ENCODE measurements at regions of chr11 and their contacts with region 1.

Region 1: GRCh38 chr11:108222686-108223448 is at the start of gene ATM:
- DNase-seq: peak; percentile 98
- H3K4me3 Mint-ChIP-seq: no peak within 1 kb of the TSS
- H3K27ac Mint-ChIP-seq: no peak within 1 kb of the TSS
- H3K4me1 Mint-ChIP-seq: peaks cover 35% of the 10 kb centered on the region
- H3K27me3 Mint-ChIP-seq: no peaks in the 10 kb centered on the region
- total RNA-seq, gene ATM: 37.3 and 39.7 TPM in 2 replicates

Region 2: DNA sequence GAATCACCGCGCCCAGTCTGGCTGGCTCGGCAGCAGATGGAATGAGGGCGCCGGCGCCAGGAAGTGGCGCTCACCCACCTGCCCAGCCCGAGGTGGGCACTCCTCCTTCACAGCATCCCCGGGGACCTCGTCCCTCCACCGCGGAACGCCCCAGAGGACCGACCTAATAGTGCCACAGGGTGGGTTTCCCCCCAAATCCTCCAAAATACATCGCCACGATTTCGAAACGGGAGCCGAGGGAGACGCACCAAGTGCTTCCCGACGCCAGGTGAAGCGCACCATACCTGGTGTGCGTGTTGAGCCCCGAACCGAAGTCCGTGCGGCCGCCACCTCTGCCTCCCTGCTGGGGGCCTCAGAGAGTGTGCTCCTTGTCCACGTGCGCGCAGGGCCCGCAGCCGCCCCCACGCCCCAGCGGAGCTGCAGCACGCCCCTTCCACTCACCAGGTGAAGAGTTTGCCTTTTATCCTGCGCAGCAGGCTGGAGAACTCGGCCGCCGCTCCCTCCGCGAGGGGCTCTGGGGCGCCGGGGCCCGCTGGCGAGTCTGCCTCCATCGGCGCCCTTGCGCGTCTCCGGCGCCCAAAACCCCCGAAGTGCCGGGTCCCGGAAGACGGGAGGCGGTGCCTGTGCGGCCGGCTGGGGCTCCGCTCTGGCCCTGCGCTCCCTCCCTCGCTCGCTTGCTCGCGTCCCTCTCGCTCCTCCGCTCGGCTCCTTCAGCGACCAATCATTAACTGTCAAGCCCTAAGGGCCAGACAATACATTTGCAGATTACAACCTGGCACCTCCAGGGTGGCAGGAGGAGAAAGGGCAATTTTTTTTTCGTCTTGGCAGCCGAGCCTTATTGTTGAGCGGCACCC is 364.4 kb before region 1 on chr11 and contains the start of gene SLC35F2:
- intact Hi-C with region 1: loop called (anchors 5 kb)
- DNase-seq: peak; percentile 62
- H3K4me3 Mint-ChIP-seq: peak within 1 kb of the TSS; percentile 95
- H3K27ac Mint-ChIP-seq: peak within 1 kb of the TSS; percentile 83
- H3K4me1 Mint-ChIP-seq: peaks cover 26% of the 10 kb centered on the region
- H3K27me3 Mint-ChIP-seq: peaks cover 8% of the 10 kb centered on the region
- total RNA-seq, gene SLC35F2: 36.5 and 38.0 TPM in 2 replicates

Region 3: GRCh38 chr11:108199446-108200321 is 23.2 kb before region 1 on chr11:
- intact Hi-C with region 1: loop called (anchors 1 kb)
- DNase-seq: peak; percentile 48
- H3K4me3 Mint-ChIP-seq: peak overlapping the region; percentile 34
- H3K27ac Mint-ChIP-seq: peak overlapping the region; percentile 93
- H3K4me1 Mint-ChIP-seq: peaks cover 55% of the 10 kb centered on the region
- H3K27me3 Mint-ChIP-seq: no peaks in the 10 kb centered on the region

Region 4: GRCh38 chr11:108497317-108498045 is 274.6 kb after region 1 on chr11:
- intact Hi-C with region 1: loop called (anchors 1 kb)
- DNase-seq: peak; percentile 61
- H3K4me3 Mint-ChIP-seq: peak overlapping the region; percentile 90
- H3K27ac Mint-ChIP-seq: peak overlapping the region; percentile 96
- H3K4me1 Mint-ChIP-seq: peaks cover 35% of the 10 kb centered on the region
- H3K27me3 Mint-ChIP-seq: no peaks in the 10 kb centered on the region

Region 5: DNA sequence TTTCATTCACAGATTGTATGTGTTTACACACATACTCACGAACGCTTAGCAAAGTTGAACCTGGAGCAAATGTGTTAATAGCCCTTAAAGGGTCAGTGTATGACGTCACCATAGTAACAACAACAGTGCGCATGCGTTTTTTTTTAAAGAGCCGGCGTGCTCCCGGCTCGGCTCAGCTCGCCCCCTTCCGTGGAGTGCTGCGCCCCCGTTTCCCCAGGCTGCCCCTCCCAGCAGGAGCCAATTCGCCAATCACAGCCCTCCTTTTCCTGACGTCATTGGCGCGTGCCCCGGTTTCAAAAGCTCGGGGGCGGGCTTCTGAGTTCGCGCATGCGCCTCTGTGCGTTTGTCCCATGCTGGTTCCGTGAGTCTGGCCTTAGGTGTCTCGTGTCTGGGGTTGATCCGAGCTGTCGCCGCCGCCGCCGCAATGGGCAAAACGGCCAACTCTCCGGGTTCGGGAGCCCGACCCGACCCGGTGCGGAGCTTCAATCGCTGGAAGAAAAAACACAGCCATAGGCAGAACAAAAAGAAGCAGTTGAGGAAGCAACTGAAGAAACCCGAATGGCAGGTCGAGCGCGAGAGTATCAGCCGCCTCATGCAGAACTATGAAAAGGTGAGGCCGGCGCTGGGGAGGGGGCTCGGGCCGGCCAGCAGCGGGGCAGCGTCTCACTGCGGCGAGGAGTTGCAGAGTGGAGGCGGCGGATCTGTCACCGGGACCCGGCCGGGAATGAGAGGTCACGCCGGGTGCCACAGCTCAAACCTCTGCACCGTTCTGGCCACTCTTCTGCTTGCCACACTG is 442.1 kb after region 1 on chr11 and contains the start of gene DDX10:
- intact Hi-C with region 1: loop called (anchors 1 kb)
- DNase-seq: peak; percentile 98
- H3K4me3 Mint-ChIP-seq: peak within 1 kb of the TSS; percentile 100
- H3K27ac Mint-ChIP-seq: peak within 1 kb of the TSS; percentile 97
- H3K4me1 Mint-ChIP-seq: peaks cover 45% of the 10 kb centered on the region
- H3K27me3 Mint-ChIP-seq: peaks cover 7% of the 10 kb centered on the region
- total RNA-seq, gene DDX10: 68.4 and 68.8 TPM in 2 replicates

Measured in activated T-helper 1 cell treated with anti-CD3 and anti-CD28 coated beads, Interleukin-12 subunit alpha, Interleukin-12 subunit beta, Interleukin-2, Interleukin-4 antibody, amounts not matched to agents 30 ng/mL and 10 ng/mL and 1 ng/mL, durations not matched to agents 14 hours and 24 hours and 36 hours (primary cell).